ENCODE measurements at regions of chr12 and their contacts with region 1.

Region 1: DNA sequence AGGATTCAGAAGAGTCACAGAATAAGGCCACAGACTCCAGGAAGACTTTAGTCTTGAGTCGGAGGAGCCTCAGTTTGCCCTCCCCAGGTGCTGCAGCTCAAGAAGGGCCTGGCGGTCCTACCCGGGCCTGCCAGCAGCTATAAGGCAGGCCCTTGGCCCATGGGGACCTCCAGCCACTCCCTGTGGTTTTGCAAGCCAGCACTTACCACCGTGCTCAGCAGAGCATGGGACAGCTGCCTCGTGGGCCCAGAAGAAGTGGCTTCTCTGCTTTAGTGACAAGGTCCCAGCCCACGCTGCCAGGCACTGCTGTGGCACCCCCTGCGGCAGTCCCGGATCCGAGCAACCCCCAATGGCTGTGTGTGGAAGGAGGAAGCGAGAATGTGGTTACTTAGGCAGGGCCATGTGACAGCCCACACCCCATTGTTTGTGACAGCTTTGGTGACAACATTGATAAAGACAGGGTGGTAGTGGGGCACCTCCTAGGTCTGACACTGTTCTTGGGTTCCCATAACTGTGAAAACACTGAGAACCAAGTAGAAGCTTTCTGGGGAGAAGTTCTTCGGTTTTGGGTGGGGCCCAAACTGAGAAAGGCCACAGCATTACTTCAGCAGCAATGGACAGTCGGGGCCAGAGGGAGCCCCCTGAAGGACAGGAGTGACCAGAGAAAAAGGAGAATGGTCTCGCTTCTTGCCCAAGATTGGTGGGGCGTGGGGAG is at the start of gene SELPLG:
- DNase-seq: peak; percentile 83
- H3K4me3 Mint-ChIP-seq: peak within 1 kb of the TSS; percentile 98
- H3K27ac Mint-ChIP-seq: peak within 1 kb of the TSS; percentile 99
- H3K4me1 Mint-ChIP-seq: peaks cover 65% of the 10 kb centered on the region
- H3K27me3 Mint-ChIP-seq: no peaks in the 10 kb centered on the region
- total RNA-seq, gene SELPLG: 52.1 and 55.6 TPM in 2 replicates

Region 2: GRCh38 chr12:108568338-108569154 is 65.1 kb before region 1 on chr12:
- intact Hi-C with region 1: loop called (anchors 1 kb)
- DNase-seq: peak; percentile 73
- H3K4me3 Mint-ChIP-seq: peak overlapping the region; percentile 59
- H3K27ac Mint-ChIP-seq: peak overlapping the region; percentile 88
- H3K4me1 Mint-ChIP-seq: peaks cover 37% of the 10 kb centered on the region
- H3K27me3 Mint-ChIP-seq: no peaks in the 10 kb centered on the region

Region 3: DNA sequence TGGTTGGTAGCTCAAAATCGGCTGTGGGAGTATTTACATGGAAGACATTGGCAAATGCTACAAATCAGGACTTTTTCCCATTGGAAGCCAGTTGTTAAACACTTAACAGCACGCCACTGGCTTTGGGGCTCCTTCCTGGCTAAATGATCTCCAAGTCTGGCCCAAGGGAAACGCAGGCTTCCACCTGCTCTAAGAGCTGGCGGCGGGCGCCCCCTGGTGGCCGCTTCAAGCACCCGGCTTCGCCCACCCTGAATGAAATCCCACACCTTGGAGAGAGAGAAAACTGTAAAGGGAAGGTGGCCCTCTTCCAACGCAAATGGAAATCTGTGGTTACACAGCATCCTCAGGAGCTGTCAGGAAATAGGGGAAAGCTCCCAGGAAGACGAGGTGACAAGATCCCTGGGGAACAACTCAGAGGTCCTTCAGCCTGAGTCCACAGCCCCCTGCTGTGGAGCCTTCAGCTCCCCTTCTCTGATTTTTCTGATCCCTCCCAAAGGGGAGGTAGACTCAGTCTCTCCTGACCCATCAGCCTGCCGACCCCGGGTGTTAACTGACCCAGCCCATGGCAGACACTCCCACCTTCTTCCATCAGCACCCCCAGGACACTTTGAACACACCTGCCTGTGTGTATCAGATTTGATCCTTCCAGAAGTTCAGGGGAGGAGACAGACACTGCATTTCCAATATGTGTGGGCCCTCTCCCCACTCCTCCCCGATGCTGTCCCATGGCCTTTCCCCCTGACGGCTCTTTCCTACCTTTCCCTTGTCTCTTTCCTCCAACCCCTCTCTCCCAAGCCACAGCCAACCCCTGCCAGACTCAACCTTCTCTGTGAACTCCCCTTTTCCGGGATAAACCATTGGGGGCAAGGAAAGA is 15.4 kb before region 1 on chr12:
- intact Hi-C with region 1: loop called (anchors 1 kb)
- DNase-seq: peak; percentile 60
- H3K4me3 Mint-ChIP-seq: no peak overlapping the region
- H3K27ac Mint-ChIP-seq: peak overlapping the region; percentile 43
- H3K4me1 Mint-ChIP-seq: peaks cover 30% of the 10 kb centered on the region
- H3K27me3 Mint-ChIP-seq: no peaks in the 10 kb centered on the region

Region 4: GRCh38 chr12:108649669-108650068 is 16.0 kb after region 1 on chr12:
- intact Hi-C with region 1: loop called (anchors 2 kb)
- DNase-seq: no peak
- H3K4me3 Mint-ChIP-seq: no peak overlapping the region
- H3K27ac Mint-ChIP-seq: peak overlapping the region; percentile 73
- H3K4me1 Mint-ChIP-seq: peaks cover 49% of the 10 kb centered on the region
- H3K27me3 Mint-ChIP-seq: no peaks in the 10 kb centered on the region

Region 5: GRCh38 chr12:108664338-108665258 is 30.9 kb after region 1 on chr12:
- intact Hi-C with region 1: loop called (anchors 1 kb)
- DNase-seq: peak; percentile 75
- H3K4me3 Mint-ChIP-seq: no peak overlapping the region
- H3K27ac Mint-ChIP-seq: peak overlapping the region; percentile 85
- H3K4me1 Mint-ChIP-seq: peaks cover 24% of the 10 kb centered on the region
- H3K27me3 Mint-ChIP-seq: no peaks in the 10 kb centered on the region

Region 6: GRCh38 chr12:108676707-108677106 is 43.0 kb after region 1 on chr12:
- intact Hi-C with region 1: no loop called
- DNase-seq: no peak
- H3K4me3 Mint-ChIP-seq: no peak overlapping the region
- H3K27ac Mint-ChIP-seq: no peak overlapping the region
- H3K4me1 Mint-ChIP-seq: peaks cover 20% of the 10 kb centered on the region
- H3K27me3 Mint-ChIP-seq: no peaks in the 10 kb centered on the region

Region 7: GRCh38 chr12:108691175-108691997 is 57.7 kb after region 1 on chr12:
- intact Hi-C with region 1: loop called (anchors 1 kb)
- DNase-seq: peak; percentile 55
- H3K4me3 Mint-ChIP-seq: peak overlapping the region; percentile 62
- H3K27ac Mint-ChIP-seq: peak overlapping the region; percentile 99
- H3K4me1 Mint-ChIP-seq: peaks cover 64% of the 10 kb centered on the region
- H3K27me3 Mint-ChIP-seq: no peaks in the 10 kb centered on the region

Region 8: DNA sequence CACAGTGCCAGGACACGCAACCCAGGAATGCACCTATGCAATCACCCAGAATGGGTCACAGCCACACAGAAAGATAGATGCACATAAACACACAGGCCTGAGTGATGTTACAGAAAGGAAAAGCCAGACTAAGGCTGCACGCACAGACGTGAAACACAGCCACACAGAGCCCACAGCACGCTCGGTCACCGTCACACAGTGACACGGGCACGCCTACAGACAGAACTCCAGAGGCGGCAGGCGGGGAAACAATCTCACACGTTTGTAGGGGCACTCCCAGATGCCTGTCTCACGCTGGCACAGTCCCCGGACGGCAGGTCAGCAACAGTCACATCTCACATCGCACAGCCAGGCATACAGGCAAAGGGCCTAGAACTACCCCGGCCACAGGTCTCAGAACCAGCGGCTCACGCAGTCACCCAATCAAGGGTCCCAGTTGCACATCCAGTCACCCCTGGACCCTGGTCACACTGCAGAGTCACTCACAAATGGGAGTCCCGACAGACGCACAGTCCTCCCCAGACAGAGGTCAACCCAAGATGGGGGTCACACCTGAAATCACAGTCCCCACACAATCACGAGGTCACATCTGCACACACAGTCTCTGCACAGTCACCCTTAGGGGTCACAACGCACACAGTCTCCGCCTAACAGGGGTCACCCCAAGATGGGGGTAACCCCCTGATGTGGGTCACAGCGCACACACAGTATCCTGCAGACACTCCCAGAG is 222.9 kb after region 1 on chr12:
- intact Hi-C with region 1: loop called (anchors 5 kb)
- DNase-seq: peak; percentile 40
- H3K4me3 Mint-ChIP-seq: peak overlapping the region; percentile 83
- H3K27ac Mint-ChIP-seq: peak overlapping the region; percentile 84
- H3K4me1 Mint-ChIP-seq: peaks cover 56% of the 10 kb centered on the region
- H3K27me3 Mint-ChIP-seq: no peaks in the 10 kb centered on the region

Measured in activated T-helper 2 cell treated with anti-CD3 and anti-CD28 coated beads, Interferon-gamma antibody, Interleukin-2, Interleukin-4, amounts not matched to agents 10 μg/mL and 5 μg/mL and 100 μg/mL, durations not matched to agents 14 hours and 24 hours and 36 hours (primary cell).